Psoas muscle (tissue), 8 donors: ENCODE measurements at regions of chr19 and their contacts with region 1.

Region 1: DNA sequence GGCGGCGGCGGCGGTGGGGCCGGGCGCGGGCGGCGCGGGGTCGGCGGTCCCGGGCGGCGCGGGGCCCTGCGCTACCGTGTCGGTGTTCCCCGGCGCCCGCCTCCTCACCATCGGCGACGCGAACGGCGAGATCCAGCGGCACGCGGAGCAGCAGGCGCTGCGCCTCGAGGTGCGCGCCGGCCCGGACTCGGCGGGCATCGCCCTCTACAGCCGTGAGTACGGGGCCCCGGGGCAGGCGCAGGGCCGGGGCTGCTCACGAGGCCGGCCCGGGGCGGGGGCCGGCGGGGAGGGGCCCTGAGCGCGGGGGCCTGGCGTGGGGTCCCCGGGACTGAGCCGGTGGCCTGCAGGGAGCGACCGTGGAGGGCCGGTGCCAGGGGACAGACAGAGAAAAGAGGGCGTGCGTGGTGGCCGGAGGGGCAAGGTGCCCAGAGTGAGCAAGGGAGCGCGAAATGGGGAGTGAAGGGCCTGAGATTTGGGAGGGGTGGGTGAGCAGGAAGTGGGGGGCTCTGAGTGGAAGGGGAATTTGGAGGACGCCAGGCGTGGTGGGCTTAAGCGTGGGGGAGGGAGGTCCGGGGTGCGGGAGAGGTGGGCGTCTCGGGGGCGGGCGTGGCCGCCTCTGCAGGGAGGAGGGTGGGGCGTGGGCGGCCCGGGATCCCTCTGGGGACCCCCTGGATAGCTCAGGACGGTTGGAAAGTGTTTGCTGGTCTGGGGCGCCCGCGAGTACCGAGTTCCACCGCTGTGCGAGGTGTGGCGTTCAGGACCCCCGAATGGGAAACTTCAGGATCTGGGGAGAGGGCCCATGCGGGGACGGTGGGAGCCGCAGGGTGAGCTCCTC is 575 bp downstream of the CARM1 start:
- DNase-seq: peak; percentile 58 to 81
- ATAC-seq: no peak
- H3K4me3 ChIP-seq: peak overlapping the region; percentile 87
- H3K27ac ChIP-seq: peak overlapping the region; percentile 96
- H3K4me1 ChIP-seq: peaks cover 31% of the 10 kb centered on the region
- H3K27me3 ChIP-seq: no peaks in the 10 kb centered on the region
- CTCF ChIP-seq: no peak

Region 2: DNA sequence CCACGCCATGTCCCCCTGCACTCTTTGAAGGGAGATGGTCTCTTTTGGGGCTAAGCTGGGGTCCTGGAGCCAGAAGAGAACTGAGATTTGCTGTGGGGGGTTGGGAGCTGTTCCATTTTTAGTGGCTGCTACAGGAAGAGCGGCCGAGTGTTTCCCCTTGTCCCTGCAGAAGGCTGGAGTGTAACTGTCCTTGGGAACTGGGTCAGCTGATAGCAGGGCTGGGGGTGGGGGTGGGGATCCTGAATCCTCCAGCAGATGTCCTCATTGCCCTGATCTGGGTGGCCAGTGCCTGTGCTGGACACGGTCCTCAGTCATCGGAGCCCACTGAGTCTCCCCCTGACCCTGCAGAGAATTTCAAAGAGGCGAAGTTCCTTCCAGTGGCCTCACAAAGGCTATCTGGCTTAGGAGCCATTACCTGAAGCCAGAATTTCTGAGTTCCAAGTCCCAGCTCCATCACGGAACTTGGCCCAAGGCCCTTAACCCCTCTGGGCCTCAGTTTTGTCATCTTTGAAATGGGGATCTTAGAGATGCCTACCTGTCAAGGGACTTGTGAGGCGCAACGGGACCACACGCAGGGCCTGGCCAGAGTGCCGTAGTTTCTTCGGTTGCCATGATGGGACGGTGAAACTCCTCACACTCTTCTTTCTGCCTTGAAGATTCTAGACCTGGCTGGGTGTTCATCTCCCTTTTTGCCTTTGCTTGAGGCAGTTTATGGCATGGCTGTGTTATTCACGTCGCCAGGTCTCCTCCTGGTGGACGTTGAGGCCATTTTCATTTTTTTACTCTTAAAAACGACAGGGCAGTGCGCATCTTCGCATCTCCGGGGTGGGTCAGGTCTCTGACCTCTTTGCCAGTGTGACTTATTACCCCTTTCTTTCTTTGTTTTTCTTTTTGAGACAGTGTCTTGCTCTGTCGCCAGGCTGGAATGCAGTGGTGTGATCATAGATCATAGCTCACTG is 102.1 kb before region 1 on chr19:
- intact Hi-C with region 1: loop called in 1 of 2 experiments (anchors 5 kb)
- DNase-seq: peak; percentile 70 to 82
- ATAC-seq: peak; percentile 89 to 91 (median 91)
- H3K4me3 ChIP-seq: peak overlapping the region; percentile 4
- H3K27ac ChIP-seq: peak overlapping the region; percentile 74
- H3K4me1 ChIP-seq: peaks cover 48% of the 10 kb centered on the region
- H3K27me3 ChIP-seq: no peaks in the 10 kb centered on the region
- CTCF ChIP-seq: peak; percentile 39

Region 3: GRCh38 chr19:10923260-10924112 is 51.6 kb after region 1 on chr19:
- intact Hi-C with region 1: loop called (anchors 2 to 5 kb)
- DNase-seq: no peak
- ATAC-seq: no peak
- H3K4me3 ChIP-seq: no peak overlapping the region
- H3K27ac ChIP-seq: peak overlapping the region; percentile 85
- H3K4me1 ChIP-seq: peaks cover 8% of the 10 kb centered on the region
- H3K27me3 ChIP-seq: no peaks in the 10 kb centered on the region
- CTCF ChIP-seq: no peak

Region 4: DNA sequence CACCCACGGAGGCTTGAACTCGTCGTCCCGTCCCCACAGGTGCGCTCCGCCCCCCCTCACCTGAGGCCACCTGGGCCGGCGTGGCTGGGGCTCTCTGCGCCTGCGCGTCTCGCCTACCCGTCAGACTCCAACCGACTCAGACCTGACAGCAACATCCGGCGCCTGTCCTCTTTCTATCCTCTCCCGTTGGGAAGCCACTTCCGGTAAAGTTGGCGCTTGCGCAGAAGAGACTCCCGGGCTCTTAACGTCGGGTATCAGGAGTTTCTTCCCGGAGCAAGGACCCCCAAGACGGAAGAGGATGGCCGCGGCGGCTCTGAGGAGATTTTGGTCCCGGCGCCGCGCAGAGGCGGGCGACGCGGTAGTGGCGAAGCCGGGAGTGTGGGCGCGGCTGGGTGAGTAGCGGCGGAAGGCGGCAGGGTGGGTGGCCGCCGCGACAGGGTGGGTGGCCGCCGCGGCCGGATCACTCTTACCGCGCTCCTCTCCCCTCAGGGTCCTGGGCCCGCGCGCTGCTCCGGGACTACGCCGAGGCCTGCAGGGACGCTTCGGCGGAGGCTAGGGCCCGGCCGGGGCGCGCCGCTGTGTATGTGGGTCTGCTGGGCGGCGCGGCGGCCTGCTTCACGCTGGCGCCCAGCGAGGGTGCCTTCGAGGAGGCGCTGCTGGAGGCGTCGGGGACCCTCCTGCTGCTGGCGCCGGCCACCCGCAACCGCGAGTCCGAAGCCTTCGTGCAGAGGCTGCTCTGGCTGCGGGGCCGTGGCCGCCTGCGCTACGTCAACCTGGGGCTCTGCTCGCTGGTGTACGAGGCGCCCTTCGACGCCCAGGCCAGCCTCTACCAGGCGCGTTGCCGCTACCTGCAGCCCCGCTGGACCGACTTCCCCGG is 56.8 kb after region 1 on chr19 and contains the starts of genes TIMM29 and YIPF2:
- intact Hi-C with region 1: loop called (anchors 2 to 5 kb)
- DNase-seq: peak; percentile 97 to 98
- ATAC-seq: peak; percentile 91 to 94 (median 92)
- H3K4me3 ChIP-seq: peak within 1 kb of the TSS; percentile 99
- H3K27ac ChIP-seq: peak within 1 kb of the TSS; percentile 84
- H3K4me1 ChIP-seq: peaks cover 26% of the 10 kb centered on the region
- H3K27me3 ChIP-seq: no peaks in the 10 kb centered on the region
- CTCF ChIP-seq: no peak
- total RNA-seq, gene TIMM29: 12.9 to 24.2 (median 17.0) TPM
- total RNA-seq, gene YIPF2: 12.1 to 18.0 (median 16.7) TPM